ENCODE measurements at regions of chr4 and their contacts with region 1.

Region 1: GRCh38 chr4:113547487-113548042 is 214.0 kb downstream of the CAMK2D start:
- DNase-seq: peak; percentile 81 to 91
- ATAC-seq: peak; percentile 96 to 99
- H3K4me3 ChIP-seq: no peak overlapping the region
- H3K27ac ChIP-seq: peak overlapping the region; percentile 69 to 81 (median 78)
- H3K4me1 ChIP-seq: peaks cover 16 to 22% of the 10 kb centered on the region in 2 donors
- H3K27me3 ChIP-seq: no peaks in the 10 kb centered on the region
- CTCF ChIP-seq: peak; percentile 95 to 98 (median 96)
- POLR2A ChIP-seq: peak in 1 of 2 donors; percentile 13

Region 2: DNA sequence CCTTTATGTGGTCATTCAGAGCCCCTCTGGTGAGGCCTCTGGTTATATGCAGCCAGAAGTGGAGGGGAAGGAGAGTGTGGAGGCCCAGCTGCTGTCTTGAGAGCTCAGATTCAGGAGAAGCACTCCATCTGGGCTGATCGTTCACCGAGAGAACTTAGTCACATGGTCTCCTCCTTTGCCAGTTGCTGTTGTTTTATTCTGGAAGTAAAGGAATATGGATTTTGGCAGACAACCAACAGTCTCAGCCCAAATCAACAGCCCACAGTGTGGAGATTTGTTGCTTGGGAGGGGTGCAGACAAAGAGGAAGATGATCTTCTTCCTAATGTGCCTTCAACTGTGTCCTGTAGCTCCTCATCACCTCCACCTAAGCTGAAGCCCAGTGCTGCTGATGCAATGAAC is 142.7 kb before region 1 on chr4:
- in situ Hi-C with region 1: loop called in 1 of 4 experiments (anchors 10 kb)
- intact Hi-C with region 1: no loop called
- DNase-seq: no peak
- ATAC-seq: no peak
- H3K4me3 ChIP-seq: no peak overlapping the region
- H3K27ac ChIP-seq: no peak overlapping the region
- H3K4me1 ChIP-seq: peaks cover 0 to 13% of the 10 kb centered on the region in 2 donors
- H3K27me3 ChIP-seq: no peaks in the 10 kb centered on the region
- CTCF ChIP-seq: no peak
- POLR2A ChIP-seq: no peak

Region 3: GRCh38 chr4:113636438-113636818 is 88.9 kb after region 1 on chr4:
- in situ Hi-C with region 1: no loop called
- intact Hi-C with region 1: loop called (anchors 5 kb)
- DNase-seq: no peak
- ATAC-seq: peak in 1 of 2 donors; percentile 47
- H3K4me3 ChIP-seq: no peak overlapping the region
- H3K27ac ChIP-seq: peak overlapping the region; percentile 30 to 62 (median 51)
- H3K4me1 ChIP-seq: peaks cover 58 to 79% of the 10 kb centered on the region in 2 donors
- H3K27me3 ChIP-seq: no peaks in the 10 kb centered on the region
- CTCF ChIP-seq: no peak
- POLR2A ChIP-seq: no peak

Region 4: GRCh38 chr4:113708250-113708649 is 160.7 kb after region 1 on chr4:
- in situ Hi-C with region 1: no loop called
- intact Hi-C with region 1: loop called (anchors 5 kb)
- DNase-seq: peak in 1 of 2 donors; percentile 28
- ATAC-seq: peak; percentile 36 to 63
- H3K4me3 ChIP-seq: no peak overlapping the region
- H3K27ac ChIP-seq: peak overlapping the region; percentile 74 to 85 (median 81)
- H3K4me1 ChIP-seq: peaks cover 43 to 67% of the 10 kb centered on the region in 2 donors
- H3K27me3 ChIP-seq: no peaks in the 10 kb centered on the region
- CTCF ChIP-seq: no peak
- POLR2A ChIP-seq: no peak

Region 5: GRCh38 chr4:113761620-113762185 is 214.1 kb after region 1 on chr4 and contains the start of gene CAMK2D:
- in situ Hi-C with region 1: loop called (anchors 5 to 10 kb)
- intact Hi-C with region 1: loop called (anchors 1 kb)
- DNase-seq: peak; percentile 91 to 94
- ATAC-seq: peak; percentile 74 to 75
- H3K4me3 ChIP-seq: peak within 1 kb of the TSS; percentile 76 to 90 (median 86)
- H3K27ac ChIP-seq: peak within 1 kb of the TSS; percentile 93 to 99 (median 98)
- H3K4me1 ChIP-seq: peaks cover 29 to 31% of the 10 kb centered on the region in 2 donors
- H3K27me3 ChIP-seq: no peaks in the 10 kb centered on the region
- CTCF ChIP-seq: peak; percentile 38 to 81 (median 60)
- POLR2A ChIP-seq: peak; percentile 60 to 77
- total RNA-seq, gene CAMK2D: 73.2 to 149 (median 119) TPM